Posterior cingulate gyrus (tissue), 11 donors: ENCODE measurements at regions of chr7 and their contacts with region 1.

Region 1: GRCh38 chr7:44847508-44847920 is 373 bp downstream of the H2AZ2 start:
- DNase-seq: peak; percentile 73 to 98 (median 81)

Region 2: DNA sequence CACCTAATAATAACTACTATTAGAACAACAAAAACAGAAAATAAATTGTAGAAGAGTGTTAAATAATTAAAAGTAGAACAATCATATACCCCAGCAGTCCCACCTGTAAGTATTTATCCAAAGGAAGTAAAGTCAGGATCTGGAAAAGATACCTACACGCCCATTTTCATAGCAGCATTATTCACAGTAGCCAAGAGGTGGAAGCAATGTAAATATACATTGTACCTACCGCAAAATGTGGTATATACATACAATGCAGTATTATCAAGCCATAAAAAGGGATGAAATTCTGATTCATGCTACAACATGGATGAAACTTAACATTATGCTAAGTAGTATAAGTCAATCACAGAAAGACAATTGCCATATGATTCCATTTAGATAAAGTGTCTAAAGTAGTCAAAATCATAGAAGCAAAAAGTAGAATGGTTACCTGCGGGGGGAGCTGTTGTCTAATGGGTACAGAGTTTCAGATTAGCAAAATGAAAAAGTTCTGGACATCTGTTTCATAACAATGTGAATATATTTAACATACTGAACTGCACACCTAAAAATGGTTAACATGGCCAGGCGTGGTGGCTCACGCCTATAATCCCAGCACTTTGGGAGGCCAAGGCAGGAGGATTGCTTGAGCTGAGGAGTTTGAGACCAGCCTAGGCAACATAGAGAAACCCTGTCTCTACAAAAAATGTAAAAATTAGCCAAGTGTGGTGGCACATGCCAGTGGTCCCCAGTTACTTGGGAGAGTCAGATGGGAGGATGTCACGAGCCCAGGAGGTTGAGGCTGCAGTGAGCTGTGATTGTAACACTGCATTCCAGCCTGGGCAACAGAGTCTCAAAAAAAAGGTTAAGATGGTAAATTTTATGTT is 259.4 kb before region 1 on chr7:
- intact Hi-C with region 1: loop called (anchors 5 kb)
- DNase-seq: peak in 2 of 10 donors; percentile 28 to 36

Region 3: GRCh38 chr7:44606450-44607254 is 240.9 kb before region 1 on chr7 and contains the start of gene OGDH:
- intact Hi-C with region 1: loop called (anchors 5 kb)
- DNase-seq: peak; percentile 98 to 100 (median 99)

Region 4: DNA sequence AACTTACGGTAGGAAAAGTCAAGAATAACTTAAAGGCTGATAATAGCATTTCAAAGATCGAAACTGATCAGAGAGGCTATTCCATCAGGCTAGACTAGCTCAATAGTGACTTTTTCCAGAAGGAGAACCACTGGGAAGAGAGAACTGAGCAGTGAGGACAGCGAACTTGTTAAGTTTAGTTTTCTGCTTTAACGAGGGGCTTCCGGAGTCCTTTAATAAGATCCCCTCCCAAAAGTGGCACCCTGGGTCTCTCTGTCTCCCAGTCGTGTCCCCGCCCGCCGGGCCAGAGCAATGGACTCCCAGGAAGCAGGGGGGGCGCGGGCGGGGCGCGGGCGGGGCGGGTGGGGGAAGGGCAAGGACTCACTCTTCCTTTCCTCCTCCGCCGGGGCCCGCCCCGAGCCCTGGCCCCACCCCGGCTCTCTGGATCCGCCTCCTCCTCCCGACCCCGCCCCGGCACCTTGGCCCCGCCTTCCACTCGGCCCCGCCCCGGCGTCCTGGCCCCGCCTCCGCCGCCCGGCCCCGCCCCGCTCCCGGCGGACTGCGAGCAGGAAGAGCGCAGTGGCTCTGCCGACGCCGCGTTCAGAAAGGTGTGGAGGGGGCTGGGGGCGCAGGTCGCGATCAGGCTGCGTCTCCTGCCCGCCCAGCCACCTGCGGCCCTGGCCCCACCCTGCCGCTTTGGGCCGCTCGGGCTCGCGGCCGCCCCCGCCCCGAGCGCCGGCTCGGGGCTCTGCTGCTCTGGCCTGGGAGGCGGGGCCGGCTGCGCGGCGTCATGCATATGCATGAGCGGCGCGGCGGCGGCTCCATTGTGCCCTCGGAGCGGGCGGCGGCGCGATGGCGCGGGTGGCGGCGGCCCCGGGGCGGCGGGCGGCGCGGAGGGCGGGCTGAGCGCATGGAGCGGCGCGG is 99.2 kb before region 1 on chr7 and contains the start of gene ZMIZ2:
- intact Hi-C with region 1: loop called (anchors 5 kb)
- DNase-seq: peak; percentile 89 to 99 (median 94)